ENCODE measurements at regions of chr19 and their contacts with region 1.

Region 1: DNA sequence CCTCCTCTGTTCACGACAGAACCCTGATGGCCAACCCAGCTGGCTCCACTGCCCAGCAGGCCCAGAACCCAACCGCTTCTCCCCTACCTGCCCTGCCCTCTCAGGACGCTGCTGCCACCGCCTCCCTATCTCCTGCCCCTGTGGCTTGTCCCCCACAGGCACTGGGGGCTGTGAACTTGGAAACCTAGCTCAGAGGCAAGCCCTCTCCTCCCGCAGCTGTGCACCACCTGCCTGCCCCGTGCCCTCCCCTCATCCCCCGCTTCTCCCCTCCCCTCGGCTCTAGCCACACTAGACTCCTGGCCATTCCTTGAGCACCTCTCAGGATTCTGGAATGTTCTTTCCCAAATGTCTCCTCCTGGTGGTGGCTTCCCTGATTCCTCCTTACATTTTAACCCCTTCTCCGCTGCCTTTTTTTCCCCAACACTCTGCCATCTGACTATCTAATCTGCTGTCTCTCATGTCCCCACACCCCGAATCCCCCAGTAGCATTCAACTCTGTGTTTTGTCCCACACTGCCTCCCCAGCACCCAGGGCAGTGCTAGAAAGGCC is 6.7 kb downstream of the NANOS3 start:
- DNase-seq: no peak
- H3K4me3 ChIP-seq: no peak overlapping the region
- H3K27ac ChIP-seq: no peak overlapping the region
- H3K4me1 ChIP-seq: no peaks in the 10 kb centered on the region
- H3K27me3 ChIP-seq: no peaks in the 10 kb centered on the region
- CTCF ChIP-seq: no peak
- POLR2A ChIP-seq: no peak

Region 2: DNA sequence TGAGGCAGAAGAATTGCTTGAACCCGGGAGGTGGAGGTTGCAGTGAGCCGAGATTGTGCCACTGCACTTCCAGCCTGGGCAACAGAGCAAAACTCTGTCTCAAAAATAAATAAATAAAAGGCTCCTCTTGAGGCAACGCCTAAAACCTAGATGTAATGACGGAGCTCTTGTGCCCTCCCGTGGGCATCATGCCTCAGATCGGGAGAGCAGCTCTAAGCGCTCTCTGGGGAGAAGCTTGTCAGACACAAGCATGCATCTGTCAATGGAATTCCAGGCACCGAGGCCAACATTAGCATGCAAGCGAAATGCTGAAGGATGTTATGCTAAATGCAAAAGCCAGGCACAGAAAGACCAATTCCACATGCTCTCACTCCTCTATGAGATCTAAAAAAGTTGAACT is 164.9 kb before region 1 on chr19:
- intact Hi-C with region 1: no loop called
- DNase-seq: peak in 1 of 2 donors; percentile 17
- H3K4me3 ChIP-seq: no peak overlapping the region
- H3K27ac ChIP-seq: no peak overlapping the region
- H3K4me1 ChIP-seq: no peaks in the 10 kb centered on the region
- H3K27me3 ChIP-seq: no peaks in the 10 kb centered on the region
- CTCF ChIP-seq: peak in 1 of 4 experiments; percentile 25
- POLR2A ChIP-seq: no peak

Region 3: GRCh38 chr19:13839130-13839937 is 44.3 kb before region 1 on chr19:
- intact Hi-C with region 1: no loop called
- DNase-seq: peak; percentile 85 to 86
- H3K4me3 ChIP-seq: peak overlapping the region; percentile 56 to 96
- H3K27ac ChIP-seq: peak overlapping the region; percentile 99 to 100
- H3K4me1 ChIP-seq: peaks cover 4 to 31% of the 10 kb centered on the region in 2 donors
- H3K27me3 ChIP-seq: no peaks in the 10 kb centered on the region
- CTCF ChIP-seq: no peak
- POLR2A ChIP-seq: peak; percentile 21 to 45

Region 4: GRCh38 chr19:14073261-14073924 is 189.8 kb after region 1 on chr19:
- intact Hi-C with region 1: loop called (anchors 2 kb)
- DNase-seq: peak; percentile 51 to 69
- H3K4me3 ChIP-seq: peak overlapping the region; percentile 41 to 59
- H3K27ac ChIP-seq: peak overlapping the region; percentile 83 to 89
- H3K4me1 ChIP-seq: peaks cover 0 to 4% of the 10 kb centered on the region in 2 donors
- H3K27me3 ChIP-seq: no peaks in the 10 kb centered on the region
- CTCF ChIP-seq: peak in 3 of 4 experiments; percentile 64 to 97 (median 93)
- POLR2A ChIP-seq: peak in 1 of 2 donors; percentile 53

Measured in uterus (tissue), 4 donors.